ENCODE measurements at regions of chr1 and their contacts with region 1.

Region 1: DNA sequence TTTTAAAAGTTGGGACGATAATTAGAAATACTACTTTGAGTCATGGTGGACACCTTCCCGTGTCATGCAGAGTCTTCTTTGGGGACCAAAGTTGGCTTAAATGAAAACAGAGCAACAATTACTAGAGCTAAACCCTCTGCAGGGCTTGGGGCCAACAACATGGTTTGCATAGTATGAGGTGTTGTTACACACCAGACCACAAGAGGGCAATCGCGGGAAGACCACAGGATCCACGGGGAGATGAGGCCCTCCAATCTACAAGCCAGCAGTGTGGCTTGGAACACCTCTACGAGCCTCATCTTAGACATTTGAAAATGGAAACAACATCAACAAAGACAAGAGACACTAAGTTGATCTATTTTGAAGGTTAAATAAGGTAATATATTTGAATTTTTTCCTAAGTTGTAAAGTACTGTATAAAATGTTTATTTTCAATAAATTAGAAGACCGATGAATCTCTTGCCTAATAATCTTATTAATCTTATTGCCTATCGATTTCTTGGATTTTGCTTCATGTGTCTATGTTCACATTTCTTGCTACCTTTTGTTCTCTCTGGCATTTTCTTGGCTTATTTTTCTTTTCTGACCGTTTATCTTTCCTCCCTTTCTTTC is 8.2 kb upstream of the SMCP start:
- DNase-seq: peak; percentile 91
- H3K4me3 Mint-ChIP-seq: no peak overlapping the region
- H3K27ac Mint-ChIP-seq: no peak overlapping the region
- H3K4me1 Mint-ChIP-seq: peaks cover 20% of the 10 kb centered on the region
- H3K27me3 Mint-ChIP-seq: no peaks in the 10 kb centered on the region
- CTCF ChIP-seq: peak; percentile 95

Region 2: GRCh38 chr1:152735648-152736047 is 134.3 kb before region 1 on chr1:
- CTCF ChIA-PET with region 1: interaction called, 14 read pairs
- POLR2A ChIA-PET with region 1: no interaction called
- intact Hi-C with region 1: no loop called
- DNase-seq: peak; percentile 60
- H3K4me3 Mint-ChIP-seq: no peak overlapping the region
- H3K27ac Mint-ChIP-seq: no peak overlapping the region
- H3K4me1 Mint-ChIP-seq: peaks cover 11% of the 10 kb centered on the region
- H3K27me3 Mint-ChIP-seq: no peaks in the 10 kb centered on the region
- CTCF ChIP-seq: peak; percentile 67

Region 3: DNA sequence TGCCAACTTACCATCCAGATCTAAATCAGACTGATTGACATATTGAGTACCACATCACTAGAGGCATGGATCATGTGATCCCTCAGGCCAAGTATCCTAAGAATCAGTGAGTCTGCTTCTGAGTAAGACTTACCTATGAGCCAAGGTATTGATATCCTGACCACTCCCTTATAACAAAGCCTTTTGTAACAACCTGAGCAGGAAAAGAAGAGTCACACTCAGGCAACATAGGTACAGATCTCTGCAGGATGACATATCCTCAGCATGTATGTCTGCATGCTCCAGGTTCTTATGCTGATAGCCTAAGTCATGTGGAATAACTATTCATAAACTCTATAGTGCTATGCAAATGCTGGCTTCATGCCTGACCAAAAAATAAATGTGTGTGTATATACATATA is 45.0 kb before region 1 on chr1:
- CTCF ChIA-PET with region 1: interaction called, 10 read pairs
- POLR2A ChIA-PET with region 1: no interaction called
- intact Hi-C with region 1: no loop called
- DNase-seq: no peak
- H3K4me3 Mint-ChIP-seq: no peak overlapping the region
- H3K27ac Mint-ChIP-seq: no peak overlapping the region
- H3K4me1 Mint-ChIP-seq: no peaks in the 10 kb centered on the region
- H3K27me3 Mint-ChIP-seq: peaks cover 15% of the 10 kb centered on the region
- CTCF ChIP-seq: no peak

Region 4: GRCh38 chr1:152906023-152906565 is 36.2 kb after region 1 on chr1:
- CTCF ChIA-PET with region 1: interaction called, 46 read pairs
- POLR2A ChIA-PET with region 1: no interaction called
- intact Hi-C with region 1: loop called (anchors 1 kb)
- DNase-seq: peak; percentile 81
- H3K4me3 Mint-ChIP-seq: no peak overlapping the region
- H3K27ac Mint-ChIP-seq: peak overlapping the region; percentile 89
- H3K4me1 Mint-ChIP-seq: peaks cover 28% of the 10 kb centered on the region
- H3K27me3 Mint-ChIP-seq: no peaks in the 10 kb centered on the region
- CTCF ChIP-seq: no peak

Region 5: DNA sequence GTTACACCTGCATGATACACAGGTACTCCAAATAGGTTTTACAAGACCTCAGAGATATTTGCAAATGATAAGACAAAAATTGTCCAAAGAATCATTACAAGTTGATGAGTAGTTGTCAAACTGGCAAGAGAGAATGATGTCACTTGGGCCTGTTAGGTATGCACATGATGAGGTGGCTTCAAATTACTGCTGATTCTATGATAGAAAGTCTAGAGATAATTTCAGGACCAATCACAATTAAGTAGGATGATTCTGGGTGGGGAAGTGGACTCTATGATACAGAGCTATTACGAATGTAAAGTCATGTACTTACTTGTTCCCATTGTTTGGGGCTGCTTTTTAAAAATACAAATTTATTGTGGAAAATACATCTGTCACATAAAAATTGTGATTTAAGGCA is 155.9 kb after region 1 on chr1:
- CTCF ChIA-PET with region 1: interaction called, 11 read pairs
- POLR2A ChIA-PET with region 1: no interaction called
- intact Hi-C with region 1: no loop called
- DNase-seq: no peak
- H3K4me3 Mint-ChIP-seq: no peak overlapping the region
- H3K27ac Mint-ChIP-seq: no peak overlapping the region
- H3K4me1 Mint-ChIP-seq: no peaks in the 10 kb centered on the region
- H3K27me3 Mint-ChIP-seq: no peaks in the 10 kb centered on the region
- CTCF ChIP-seq: no peak

Region 6: DNA sequence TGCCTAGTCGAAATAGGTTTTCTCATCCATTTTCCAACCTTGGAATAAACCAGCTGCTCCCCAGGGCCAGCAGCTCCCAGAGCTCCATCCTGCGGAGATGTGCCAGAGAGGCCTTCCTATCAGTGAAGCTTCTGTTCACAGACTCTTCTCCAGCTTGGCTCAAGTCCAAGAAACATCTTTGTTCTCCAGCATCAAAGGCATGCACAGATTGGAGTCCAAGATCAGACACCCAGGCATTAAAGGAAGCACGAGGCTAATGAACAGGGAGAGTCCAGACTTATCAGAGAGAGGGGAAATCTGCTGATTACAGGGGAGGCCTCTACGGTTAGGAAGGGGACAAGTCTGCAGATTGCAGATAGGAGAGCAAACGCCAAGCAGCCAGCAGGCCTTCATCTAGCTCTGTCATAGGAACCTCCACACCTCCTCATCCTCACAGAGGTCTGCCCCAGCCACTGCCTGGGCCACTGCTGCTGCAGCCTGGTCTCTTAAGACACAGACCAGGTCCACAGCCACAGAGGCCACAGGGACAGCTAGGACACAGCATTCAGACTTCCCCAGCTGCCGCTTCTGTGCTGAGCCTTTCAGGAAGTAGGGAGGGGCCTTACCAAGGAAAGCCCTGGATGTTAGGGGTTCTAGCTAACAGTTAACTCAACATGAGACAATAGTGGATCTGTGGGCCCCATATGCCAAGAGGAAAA is 350.8 kb after region 1 on chr1:
- CTCF ChIA-PET with region 1: interaction called, 105 read pairs
- POLR2A ChIA-PET with region 1: interaction called, 4 read pairs
- intact Hi-C with region 1: loop called (anchors 1 kb)
- DNase-seq: no peak
- H3K4me3 Mint-ChIP-seq: no peak overlapping the region
- H3K27ac Mint-ChIP-seq: no peak overlapping the region
- H3K4me1 Mint-ChIP-seq: peaks cover 7% of the 10 kb centered on the region
- H3K27me3 Mint-ChIP-seq: peaks cover 23% of the 10 kb centered on the region
- CTCF ChIP-seq: no peak

Measured in MCF 10A (cell line).